ENCODE measurements at regions of chr17 and their contacts with region 1.

Region 1: GRCh38 chr17:57130761-57131461 is 45.9 kb downstream of the AKAP1 start:
- DNase-seq: peak; percentile 68 to 92
- ATAC-seq: peak; percentile 84 to 99 (median 96)
- H3K4me3 ChIP-seq: no peak overlapping the region
- H3K4me3 Mint-ChIP-seq: no peak overlapping the region
- H3K27ac ChIP-seq: no peak overlapping the region
- H3K27ac Mint-ChIP-seq: no peak overlapping the region
- H3K4me1 ChIP-seq: no peaks in the 10 kb centered on the region
- H3K4me1 Mint-ChIP-seq: no peaks in the 10 kb centered on the region
- H3K27me3 ChIP-seq: no peaks in the 10 kb centered on the region
- H3K27me3 Mint-ChIP-seq: peaks cover 0 to 3% of the 10 kb centered on the region in 2 donors
- CTCF ChIP-seq: peak; percentile 82

Region 2: GRCh38 chr17:57186226-57187019 is 55.5 kb after region 1 on chr17:
- intact Hi-C with region 1: no loop called
- DNase-seq: no peak
- ATAC-seq: no peak
- H3K4me3 ChIP-seq: no peak overlapping the region
- H3K4me3 Mint-ChIP-seq: no peak overlapping the region
- H3K27ac ChIP-seq: no peak overlapping the region
- H3K27ac Mint-ChIP-seq: no peak overlapping the region
- H3K4me1 ChIP-seq: no peaks in the 10 kb centered on the region
- H3K4me1 Mint-ChIP-seq: no peaks in the 10 kb centered on the region
- H3K27me3 ChIP-seq: no peaks in the 10 kb centered on the region
- H3K27me3 Mint-ChIP-seq: peaks cover 13 to 16% of the 10 kb centered on the region in 2 donors
- CTCF ChIP-seq: no peak

Region 3: GRCh38 chr17:57243171-57243948 is 112.4 kb after region 1 on chr17:
- intact Hi-C with region 1: loop called (anchors 2 kb)
- DNase-seq: peak; percentile 74 to 90
- ATAC-seq: peak; percentile 91 to 99 (median 99)
- H3K4me3 ChIP-seq: no peak overlapping the region
- H3K4me3 Mint-ChIP-seq: no peak overlapping the region
- H3K27ac ChIP-seq: no peak overlapping the region
- H3K27ac Mint-ChIP-seq: no peak overlapping the region
- H3K4me1 ChIP-seq: no peaks in the 10 kb centered on the region
- H3K4me1 Mint-ChIP-seq: peaks cover 8% of the 10 kb centered on the region in 2 donors
- H3K27me3 ChIP-seq: no peaks in the 10 kb centered on the region
- H3K27me3 Mint-ChIP-seq: peaks cover 24 to 49% of the 10 kb centered on the region in 2 donors
- CTCF ChIP-seq: peak; percentile 100

Region 4: GRCh38 chr17:57747221-57748017 is 616.5 kb after region 1 on chr17:
- intact Hi-C with region 1: loop called (anchors 2 kb)
- DNase-seq: peak in 1 of 2 donors; percentile 78
- ATAC-seq: peak; percentile 40 to 73 (median 68)
- H3K4me3 ChIP-seq: no peak overlapping the region
- H3K4me3 Mint-ChIP-seq: no peak overlapping the region
- H3K27ac ChIP-seq: no peak overlapping the region
- H3K27ac Mint-ChIP-seq: no peak overlapping the region
- H3K4me1 ChIP-seq: peaks cover 15% of the 10 kb centered on the region
- H3K4me1 Mint-ChIP-seq: peaks cover 7 to 15% of the 10 kb centered on the region in 2 donors
- H3K27me3 ChIP-seq: no peaks in the 10 kb centered on the region
- H3K27me3 Mint-ChIP-seq: peaks cover 16 to 25% of the 10 kb centered on the region in 2 donors
- CTCF ChIP-seq: peak; percentile 69

Region 5: GRCh38 chr17:57783106-57783742 is 652.3 kb after region 1 on chr17:
- intact Hi-C with region 1: loop called (anchors 10 kb)
- DNase-seq: peak; percentile 62 to 80
- ATAC-seq: peak; percentile 74 to 94 (median 75)
- H3K4me3 ChIP-seq: no peak overlapping the region
- H3K4me3 Mint-ChIP-seq: no peak overlapping the region
- H3K27ac ChIP-seq: no peak overlapping the region
- H3K27ac Mint-ChIP-seq: no peak overlapping the region
- H3K4me1 ChIP-seq: peaks cover 10% of the 10 kb centered on the region
- H3K4me1 Mint-ChIP-seq: no peaks in the 10 kb centered on the region
- H3K27me3 ChIP-seq: peaks cover 8% of the 10 kb centered on the region
- H3K27me3 Mint-ChIP-seq: peaks cover 7 to 10% of the 10 kb centered on the region in 2 donors
- CTCF ChIP-seq: peak; percentile 81

Region 6: DNA sequence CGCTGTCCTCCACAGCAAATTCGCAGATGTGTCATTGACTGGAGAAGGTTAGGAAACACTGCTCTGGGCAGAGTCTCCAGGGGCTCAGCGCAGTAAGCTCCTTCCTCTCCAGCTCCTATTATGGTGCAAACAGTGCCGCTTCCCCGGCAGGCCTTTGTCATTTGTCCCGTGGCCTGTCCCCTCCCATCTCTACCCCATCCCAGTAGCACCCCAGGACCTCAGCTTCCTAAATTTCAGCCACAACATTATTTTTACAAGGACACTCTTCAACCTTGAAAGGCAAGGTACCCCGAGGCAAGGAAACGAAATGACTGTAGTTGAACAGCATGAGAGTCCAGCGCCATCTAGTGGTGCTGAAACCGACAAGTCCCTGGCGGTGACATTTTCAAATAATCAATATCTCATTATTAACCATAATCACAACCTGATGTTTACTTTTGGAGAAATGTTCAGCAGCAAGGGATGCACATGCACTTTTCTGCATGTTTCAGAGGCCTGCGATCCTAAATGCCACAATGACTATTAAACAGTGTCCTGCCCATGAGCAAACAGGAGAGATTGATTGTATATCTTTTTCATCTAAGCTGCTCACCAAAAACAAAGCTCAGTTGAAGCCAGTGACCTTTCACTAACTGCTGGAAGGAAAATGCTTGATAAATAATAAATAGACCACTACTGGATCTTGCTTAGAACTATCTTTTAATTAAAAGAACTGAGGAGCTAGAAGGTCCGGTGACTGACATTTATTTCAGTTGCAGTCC is 702.4 kb after region 1 on chr17:
- intact Hi-C with region 1: loop called (anchors 2 kb)
- DNase-seq: peak; percentile 44 to 88
- ATAC-seq: peak; percentile 74 to 85 (median 81)
- H3K4me3 ChIP-seq: peak overlapping the region; percentile 20
- H3K4me3 Mint-ChIP-seq: no peak overlapping the region
- H3K27ac ChIP-seq: no peak overlapping the region
- H3K27ac Mint-ChIP-seq: no peak overlapping the region
- H3K4me1 ChIP-seq: peaks cover 7% of the 10 kb centered on the region
- H3K4me1 Mint-ChIP-seq: no peaks in the 10 kb centered on the region
- H3K27me3 ChIP-seq: no peaks in the 10 kb centered on the region
- H3K27me3 Mint-ChIP-seq: no peaks in the 10 kb centered on the region
- CTCF ChIP-seq: peak; percentile 94

Region 7: GRCh38 chr17:58112970-58113631 is 982.2 kb after region 1 on chr17:
- intact Hi-C with region 1: loop called (anchors 2 kb)
- DNase-seq: peak; percentile 72 to 90
- ATAC-seq: peak; percentile 83 to 99 (median 97)
- H3K4me3 ChIP-seq: no peak overlapping the region
- H3K4me3 Mint-ChIP-seq: no peak overlapping the region
- H3K27ac ChIP-seq: no peak overlapping the region
- H3K27ac Mint-ChIP-seq: no peak overlapping the region
- H3K4me1 ChIP-seq: no peaks in the 10 kb centered on the region
- H3K4me1 Mint-ChIP-seq: no peaks in the 10 kb centered on the region
- H3K27me3 ChIP-seq: no peaks in the 10 kb centered on the region
- H3K27me3 Mint-ChIP-seq: peaks cover 0 to 10% of the 10 kb centered on the region in 2 donors
- CTCF ChIP-seq: peak; percentile 94

Measured in natural killer cell (primary cell).